ENCODE measurements at regions of chr1 and their contacts with region 1.

Region 1: GRCh38 chr1:161117759-161118581 is at the starts of genes NIT1 and PFDN2:
- DNase-seq: peak; percentile 96

Region 2: DNA sequence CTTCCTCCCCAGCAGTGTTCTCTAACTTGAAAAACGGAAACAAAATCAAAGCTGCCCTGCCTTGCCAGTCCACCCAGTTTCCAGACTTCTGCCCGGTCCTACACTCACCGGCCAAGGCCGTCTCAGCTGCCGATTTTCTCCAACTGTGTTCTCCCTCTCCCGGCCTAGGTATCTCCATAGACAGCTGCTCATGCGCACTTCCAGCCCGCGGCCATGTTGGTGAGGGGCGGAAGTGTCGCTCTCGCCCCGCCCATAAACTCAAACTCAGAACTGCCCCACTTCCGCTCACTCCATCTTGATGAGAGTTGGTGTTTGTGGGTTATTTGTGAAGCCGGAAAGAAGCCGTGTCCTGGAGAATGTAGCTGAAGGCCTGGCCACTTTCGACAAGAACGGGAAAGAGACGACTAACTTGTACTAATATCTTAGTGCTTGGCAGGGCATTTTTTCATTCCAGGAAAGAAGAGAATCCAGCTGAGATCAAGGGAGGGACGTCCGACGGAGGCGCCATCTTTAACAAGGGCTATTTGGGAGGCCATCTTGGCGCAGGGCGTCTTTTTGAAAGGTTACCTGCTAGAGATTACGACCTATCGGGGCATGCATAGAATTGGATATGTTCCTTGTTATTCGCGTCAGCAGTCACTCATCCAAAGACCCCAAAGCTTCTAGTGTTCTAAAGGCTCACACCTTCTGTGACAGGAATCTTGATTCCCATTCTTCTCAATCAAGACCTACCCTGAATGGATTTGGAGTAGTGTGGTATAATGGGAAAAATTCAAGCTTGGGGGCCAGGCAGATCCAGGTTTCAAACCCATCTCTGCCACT is 72.0 kb before region 1 on chr1 and contains the start of gene USF1:
- CTCF ChIA-PET with region 1: no interaction called
- POLR2A ChIA-PET with region 1: interaction called, 11 read pairs
- DNase-seq: peak; percentile 97

Region 3: GRCh38 chr1:161088636-161089035 is 29.3 kb before region 1 on chr1:
- CTCF ChIA-PET with region 1: no interaction called
- POLR2A ChIA-PET with region 1: no interaction called
- DNase-seq: no peak

Region 4: DNA sequence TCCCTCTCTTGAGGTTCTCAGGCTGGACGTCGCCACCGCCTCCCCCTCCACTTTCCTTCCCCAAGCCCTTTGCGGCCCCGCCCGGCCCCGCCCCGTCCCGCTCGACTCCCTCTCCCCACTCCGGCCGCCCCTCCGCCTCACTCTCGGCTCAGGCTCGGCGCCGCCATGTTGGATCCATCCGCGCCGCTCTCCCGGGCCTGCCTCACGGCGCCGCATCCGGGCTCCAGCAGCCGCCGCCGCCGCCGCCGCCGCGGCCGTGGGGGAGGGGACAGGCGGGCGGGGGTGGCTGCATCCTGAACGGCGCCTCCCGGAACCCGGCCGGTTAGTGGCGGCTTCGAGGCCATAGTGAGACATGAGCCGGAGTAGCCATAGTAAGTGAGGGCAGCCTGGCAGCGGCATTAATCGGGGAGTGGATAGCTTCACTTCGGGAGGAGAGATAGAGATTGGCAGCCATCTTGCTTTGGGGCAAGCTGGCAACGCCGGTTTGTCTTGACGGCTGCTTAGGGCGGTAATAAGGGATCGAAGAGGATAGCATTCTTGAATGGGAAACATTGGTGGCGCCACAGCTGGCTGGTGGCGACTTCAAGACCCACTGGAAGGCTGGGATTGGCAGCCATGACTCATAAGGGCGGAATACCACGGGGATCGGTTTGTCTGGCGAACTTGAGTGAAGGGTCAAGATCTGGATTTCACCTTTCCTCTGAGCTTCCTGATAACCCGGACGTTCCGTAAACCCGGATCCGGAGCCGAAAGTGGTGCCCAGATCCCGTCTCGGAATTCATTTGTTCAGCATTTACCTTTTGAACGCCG is 14.6 kb after region 1 on chr1 and contains the start of gene DEDD:
- CTCF ChIA-PET with region 1: no interaction called
- POLR2A ChIA-PET with region 1: interaction called, 13 read pairs
- DNase-seq: peak; percentile 93

Region 5: GRCh38 chr1:161153679-161154426 is 35.9 kb after region 1 on chr1 and contains the start of gene UFC1:
- CTCF ChIA-PET with region 1: no interaction called
- POLR2A ChIA-PET with region 1: interaction called, 11 read pairs
- DNase-seq: peak; percentile 85